ENCODE measurements at regions of chr2 and their contacts with region 1.

Region 1: DNA sequence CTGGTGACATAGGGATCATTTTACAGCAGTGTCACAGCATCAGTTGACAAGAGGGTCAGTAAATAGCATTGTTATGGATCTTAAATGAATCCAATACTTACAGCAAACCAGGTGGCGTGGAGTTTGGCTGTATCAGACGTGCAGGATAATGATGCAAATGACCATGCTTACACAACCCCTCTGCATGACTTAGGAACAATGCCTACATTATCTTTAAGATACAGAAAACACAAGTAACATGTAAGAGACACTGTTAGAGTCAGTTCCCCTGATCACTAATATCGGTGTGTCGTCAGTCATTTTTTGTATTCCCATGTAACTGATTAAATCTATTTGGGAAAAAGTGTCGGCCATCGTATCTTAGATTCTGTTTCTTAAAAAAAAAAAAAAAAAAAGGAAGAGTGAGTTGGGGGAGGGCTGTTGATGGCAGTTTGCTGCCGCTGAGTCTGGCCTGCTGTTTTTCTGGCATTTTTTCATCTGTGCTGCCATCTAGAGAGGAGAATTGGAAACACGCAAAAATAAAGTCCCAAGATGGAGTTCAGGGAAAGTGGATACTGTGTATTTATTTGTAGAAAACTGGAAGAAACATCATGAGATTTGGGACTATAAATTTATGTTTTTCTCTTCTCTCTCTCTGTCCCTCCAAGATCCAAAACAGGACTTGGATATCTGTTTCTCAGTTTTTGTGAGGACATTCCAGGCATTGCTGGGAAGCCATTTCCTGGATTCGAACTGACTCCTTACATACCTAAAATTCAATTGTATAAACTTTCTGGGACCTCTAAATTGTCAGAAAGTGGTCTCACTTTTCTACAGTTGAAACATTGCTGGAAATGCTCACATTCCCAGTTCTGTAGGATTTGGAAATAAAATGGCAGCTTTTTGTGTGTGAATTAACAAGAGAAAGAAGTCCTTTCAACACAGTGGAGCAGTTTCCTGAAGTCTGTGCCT is 60.3 kb upstream of the AGPS start:
- DNase-seq: peak; percentile 41
- H3K4me3 Mint-ChIP-seq: no peak overlapping the region
- H3K27ac Mint-ChIP-seq: no peak overlapping the region
- H3K4me1 Mint-ChIP-seq: peaks cover 12% of the 10 kb centered on the region
- H3K27me3 Mint-ChIP-seq: no peaks in the 10 kb centered on the region

Region 2: GRCh38 chr2:177148477-177149154 is 183.7 kb before region 1 on chr2:
- CTCF ChIA-PET with region 1: interaction called, 11 read pairs
- POLR2A ChIA-PET with region 1: no interaction called
- DNase-seq: peak; percentile 78
- H3K4me3 Mint-ChIP-seq: peak overlapping the region; percentile 80
- H3K27ac Mint-ChIP-seq: no peak overlapping the region
- H3K4me1 Mint-ChIP-seq: peaks cover 21% of the 10 kb centered on the region
- H3K27me3 Mint-ChIP-seq: peaks cover 58% of the 10 kb centered on the region

Region 3: GRCh38 chr2:177303939-177304338 is 28.4 kb before region 1 on chr2:
- CTCF ChIA-PET with region 1: no interaction called
- POLR2A ChIA-PET with region 1: no interaction called
- DNase-seq: no peak
- H3K4me3 Mint-ChIP-seq: no peak overlapping the region
- H3K27ac Mint-ChIP-seq: no peak overlapping the region
- H3K4me1 Mint-ChIP-seq: peaks cover 2% of the 10 kb centered on the region
- H3K27me3 Mint-ChIP-seq: no peaks in the 10 kb centered on the region

Region 4: GRCh38 chr2:177413703-177414102 is 81.4 kb after region 1 on chr2:
- CTCF ChIA-PET with region 1: interaction called, 59 read pairs
- POLR2A ChIA-PET with region 1: no interaction called
- DNase-seq: no peak
- H3K4me3 Mint-ChIP-seq: no peak overlapping the region
- H3K27ac Mint-ChIP-seq: no peak overlapping the region
- H3K4me1 Mint-ChIP-seq: peaks cover 1% of the 10 kb centered on the region
- H3K27me3 Mint-ChIP-seq: no peaks in the 10 kb centered on the region

Region 5: GRCh38 chr2:177419274-177419673 is 87.0 kb after region 1 on chr2:
- CTCF ChIA-PET with region 1: interaction called, 59 read pairs
- POLR2A ChIA-PET with region 1: no interaction called
- DNase-seq: no peak
- H3K4me3 Mint-ChIP-seq: no peak overlapping the region
- H3K27ac Mint-ChIP-seq: no peak overlapping the region
- H3K4me1 Mint-ChIP-seq: peaks cover 11% of the 10 kb centered on the region
- H3K27me3 Mint-ChIP-seq: no peaks in the 10 kb centered on the region

Region 6: GRCh38 chr2:177429688-177430325 is 97.5 kb after region 1 on chr2:
- CTCF ChIA-PET with region 1: no interaction called
- POLR2A ChIA-PET with region 1: no interaction called
- DNase-seq: no peak
- H3K4me3 Mint-ChIP-seq: no peak overlapping the region
- H3K27ac Mint-ChIP-seq: no peak overlapping the region
- H3K4me1 Mint-ChIP-seq: peaks cover 2% of the 10 kb centered on the region
- H3K27me3 Mint-ChIP-seq: no peaks in the 10 kb centered on the region

Region 7: DNA sequence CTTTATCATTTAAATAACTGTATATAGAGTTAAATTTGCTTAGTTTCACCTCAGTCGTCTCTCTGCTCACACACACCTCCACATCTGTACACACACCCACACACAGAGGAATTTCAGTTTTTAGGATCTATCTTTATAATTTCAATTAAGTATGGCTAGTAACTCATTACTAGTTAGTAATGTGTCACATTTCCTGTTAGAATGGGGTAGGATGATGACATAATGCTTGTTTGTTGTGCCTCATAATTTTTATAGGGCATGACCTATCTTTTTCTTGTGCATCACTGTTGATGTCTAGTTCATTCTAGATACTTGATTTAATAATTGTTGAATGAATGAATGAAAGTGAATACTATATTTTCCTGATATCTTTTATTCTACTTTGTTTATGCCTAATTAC is 168.9 kb after region 1 on chr2:
- CTCF ChIA-PET with region 1: no interaction called
- POLR2A ChIA-PET with region 1: no interaction called
- DNase-seq: no peak
- H3K4me3 Mint-ChIP-seq: no peak overlapping the region
- H3K27ac Mint-ChIP-seq: no peak overlapping the region
- H3K4me1 Mint-ChIP-seq: peaks cover 5% of the 10 kb centered on the region
- H3K27me3 Mint-ChIP-seq: no peaks in the 10 kb centered on the region

Region 8: GRCh38 chr2:177724398-177725287 is 392.3 kb after region 1 on chr2:
- CTCF ChIA-PET with region 1: interaction called, 41 read pairs
- POLR2A ChIA-PET with region 1: no interaction called
- DNase-seq: peak; percentile 53
- H3K4me3 Mint-ChIP-seq: no peak overlapping the region
- H3K27ac Mint-ChIP-seq: no peak overlapping the region
- H3K4me1 Mint-ChIP-seq: no peaks in the 10 kb centered on the region
- H3K27me3 Mint-ChIP-seq: peaks cover 46% of the 10 kb centered on the region

Region 9: GRCh38 chr2:177763532-177764265 is 431.4 kb after region 1 on chr2:
- CTCF ChIA-PET with region 1: interaction called, 11 read pairs
- POLR2A ChIA-PET with region 1: no interaction called
- DNase-seq: peak; percentile 78
- H3K4me3 Mint-ChIP-seq: no peak overlapping the region
- H3K27ac Mint-ChIP-seq: no peak overlapping the region
- H3K4me1 Mint-ChIP-seq: peaks cover 2% of the 10 kb centered on the region
- H3K27me3 Mint-ChIP-seq: peaks cover 23% of the 10 kb centered on the region

Measured in activated CD4-positive, alpha-beta memory T cell treated with anti-CD3 and anti-CD28 coated beads, Interleukin-2, amount 10 ng/mL, durations not matched to agents 7 days and 5 days (primary cell).